OCI-LY7 (cell line): ENCODE measurements at regions of chr10 and their contacts with region 1.

Region 1: DNA sequence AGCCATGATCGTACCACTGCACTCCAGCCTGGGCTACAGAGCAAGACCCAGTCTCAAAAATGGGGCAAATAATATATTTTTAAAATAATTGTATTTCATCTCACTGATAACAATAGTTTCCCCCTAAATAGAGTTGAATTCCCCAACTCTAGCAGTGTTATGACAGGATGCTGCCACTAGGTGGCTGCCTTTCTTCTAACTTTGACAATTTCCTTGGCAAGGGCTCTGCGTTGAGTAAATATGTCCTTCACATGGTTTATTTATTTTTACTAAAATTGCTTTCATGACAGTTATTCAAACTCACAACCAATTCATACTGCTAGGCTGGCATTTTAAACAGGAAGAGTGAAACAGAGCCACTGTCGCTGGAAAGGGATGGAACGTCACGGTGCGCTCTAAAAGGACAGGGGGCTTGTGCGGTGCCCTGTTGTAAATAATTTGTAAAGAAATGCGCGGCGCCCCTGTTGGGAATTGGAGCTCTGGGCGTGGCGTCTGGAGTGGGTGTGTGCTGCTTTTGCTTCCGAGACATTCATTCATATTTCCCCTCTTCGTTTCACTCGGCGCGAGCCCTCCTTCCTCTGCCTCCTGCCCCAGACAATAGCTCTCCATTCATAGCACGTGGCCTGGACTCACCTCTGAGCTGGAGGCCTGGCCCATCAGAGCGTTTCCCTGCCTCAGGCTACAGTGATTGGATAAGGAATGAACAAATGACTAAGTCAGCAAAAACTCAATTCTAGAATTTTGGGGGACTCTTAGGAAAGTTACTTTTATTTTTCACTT is 20.5 kb upstream of the PITRM1 start:
- DNase-seq: peak; percentile 53
- H3K4me3 ChIP-seq: no peak overlapping the region
- H3K27ac ChIP-seq: no peak overlapping the region
- H3K4me1 ChIP-seq: no peaks in the 10 kb centered on the region
- CTCF ChIP-seq: peak; percentile 88

Region 2: DNA sequence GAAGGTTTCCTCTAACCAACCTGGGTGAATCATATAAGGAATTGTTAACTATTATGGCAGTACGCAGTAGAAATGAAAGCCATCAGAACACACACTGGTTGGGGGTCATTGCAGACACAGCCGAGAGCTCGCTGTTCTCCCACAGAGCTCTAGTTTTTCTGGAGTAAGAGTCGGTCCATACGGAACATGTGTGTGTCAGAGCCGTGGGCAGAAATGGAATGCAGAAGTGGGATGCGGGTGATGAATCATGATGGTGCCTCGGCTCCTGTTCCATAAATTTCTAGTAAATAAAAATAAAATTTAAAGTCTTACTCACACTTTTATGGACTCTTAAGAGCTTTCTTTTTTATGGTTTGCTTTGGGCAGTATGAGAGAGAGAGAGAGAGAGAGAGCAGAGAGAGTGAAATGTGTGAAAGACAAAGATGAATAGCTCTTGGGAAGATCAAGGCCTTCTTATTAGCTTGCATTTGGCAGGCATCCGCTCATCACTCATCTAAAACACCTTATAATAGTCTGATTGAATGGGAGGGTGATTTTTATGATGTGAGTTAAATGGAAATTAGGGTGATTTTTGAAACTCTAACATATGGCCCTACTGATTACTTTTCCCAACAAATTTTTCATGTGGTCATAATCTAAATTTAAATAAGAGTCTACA is 224.5 kb before region 1 on chr10:
- CTCF ChIA-PET with region 1: no interaction called
- POLR2A ChIA-PET with region 1: no interaction called
- intact Hi-C with region 1: no loop called
- DNase-seq: no peak
- H3K4me3 ChIP-seq: no peak overlapping the region
- H3K27ac ChIP-seq: no peak overlapping the region
- H3K4me1 ChIP-seq: no peaks in the 10 kb centered on the region
- CTCF ChIP-seq: no peak

Region 3: GRCh38 chr10:4767033-4767814 is 1574.2 kb after region 1 on chr10:
- CTCF ChIA-PET with region 1: no interaction called
- POLR2A ChIA-PET with region 1: no interaction called
- intact Hi-C with region 1: loop called (anchors 5 kb)
- DNase-seq: peak; percentile 5
- H3K4me3 ChIP-seq: no peak overlapping the region
- H3K27ac ChIP-seq: no peak overlapping the region
- H3K4me1 ChIP-seq: no peaks in the 10 kb centered on the region
- CTCF ChIP-seq: peak; percentile 61